Sciatic nerve (tissue), 2 donors: ENCODE measurements at regions of chr7 and their contacts with region 1.

Region 1: GRCh38 chr7:37198906-37199485 is 249.7 kb downstream of the ELMO1 start:
- DNase-seq: peak; percentile 89
- ATAC-seq: peak; percentile 78

Region 2: GRCh38 chr7:36487756-36488336 is 711.1 kb before region 1 on chr7:
- intact Hi-C with region 1: loop called (anchors 10 kb)
- DNase-seq: no peak
- ATAC-seq: no peak

Region 3: GRCh38 chr7:37635346-37635745 is 436.4 kb after region 1 on chr7:
- intact Hi-C with region 1: no loop called
- DNase-seq: no peak
- ATAC-seq: no peak